ENCODE measurements at regions of chr2 and their contacts with region 1.

Region 1: GRCh38 chr2:84314901-84315330 is 144.2 kb downstream of the SUCLG1 start:
- DNase-seq: peak; percentile 83
- ATAC-seq: peak; percentile 76 to 91

Region 2: GRCh38 chr2:84022810-84023431 is 292.0 kb before region 1 on chr2:
- intact Hi-C with region 1: loop called (anchors 5 kb)
- DNase-seq: no peak
- ATAC-seq: no peak

Measured in left cardiac atrium (tissue), 4 donors.